Head of caudate nucleus (tissue), 42 donors: ENCODE measurements at regions of chr3 and their contacts with region 1.

Region 1: GRCh38 chr3:40653001-40653400 is 128.2 kb downstream of the ZNF621 start:
- DNase-seq: no peak

Region 2: DNA sequence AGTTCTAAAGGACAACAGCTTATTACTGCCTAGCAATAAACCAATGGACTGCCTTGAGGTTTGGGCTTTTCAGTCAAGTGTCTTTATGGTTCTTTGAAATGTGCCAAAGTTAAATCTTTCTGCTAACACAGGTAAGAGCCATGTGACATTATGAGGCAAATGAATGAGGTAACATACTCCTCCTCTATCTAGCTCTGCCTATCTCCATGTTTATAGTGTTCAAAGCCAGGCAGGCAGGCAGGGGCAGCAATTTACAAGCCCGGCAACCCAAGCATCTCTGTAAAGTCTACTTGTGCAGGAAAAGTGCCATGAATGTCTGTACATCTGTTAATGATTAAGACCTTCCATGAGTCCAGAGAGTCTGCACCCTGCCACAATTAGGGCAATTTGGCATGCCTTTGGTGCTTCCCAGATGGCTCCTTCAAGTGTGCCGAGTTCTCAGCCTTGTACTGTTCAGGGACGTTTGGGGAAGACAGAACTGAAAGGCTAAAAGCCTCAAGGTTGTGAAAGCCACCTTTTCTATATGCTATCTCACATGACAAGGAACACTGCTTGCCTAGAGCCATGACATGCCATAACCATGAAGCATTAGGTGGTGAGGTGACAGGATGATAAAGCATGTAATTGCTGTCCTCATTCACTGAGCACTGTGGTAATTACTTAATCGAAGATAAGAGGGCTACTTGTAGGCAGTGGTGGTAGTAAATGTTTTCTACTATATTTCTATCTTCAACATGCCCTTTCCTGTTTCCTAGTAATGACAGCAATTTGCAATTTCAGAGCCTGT is 384.9 kb before region 1 on chr3:
- intact Hi-C with region 1: no loop called
- DNase-seq: no peak

Region 3: DNA sequence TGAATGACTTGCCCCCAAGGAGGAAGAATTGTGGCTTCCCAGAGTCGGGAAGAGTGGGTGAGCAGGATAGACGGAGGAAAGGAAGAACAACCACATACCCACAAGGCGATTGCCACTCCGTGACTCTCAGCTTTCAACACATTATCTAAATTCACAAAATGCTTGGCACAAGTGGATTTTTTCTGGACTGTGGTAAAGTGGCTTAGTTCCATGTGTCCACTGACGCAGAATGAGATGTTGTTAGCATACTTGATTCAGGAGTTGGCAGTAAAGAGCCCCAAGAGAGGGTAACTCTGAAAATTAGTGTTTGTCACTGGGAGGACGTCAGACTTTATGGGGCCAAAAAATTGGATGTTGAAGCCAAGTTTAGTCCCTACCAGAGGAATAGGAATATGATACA is 347.5 kb after region 1 on chr3:
- intact Hi-C with region 1: loop called (anchors 5 kb)
- DNase-seq: no peak